Activated naive CD4-positive, alpha-beta T cell treated with anti-CD3 and anti-CD28 coated beads for 36 hours (primary cell): ENCODE measurements at regions of chr7 and their contacts with region 1.

Region 1: DNA sequence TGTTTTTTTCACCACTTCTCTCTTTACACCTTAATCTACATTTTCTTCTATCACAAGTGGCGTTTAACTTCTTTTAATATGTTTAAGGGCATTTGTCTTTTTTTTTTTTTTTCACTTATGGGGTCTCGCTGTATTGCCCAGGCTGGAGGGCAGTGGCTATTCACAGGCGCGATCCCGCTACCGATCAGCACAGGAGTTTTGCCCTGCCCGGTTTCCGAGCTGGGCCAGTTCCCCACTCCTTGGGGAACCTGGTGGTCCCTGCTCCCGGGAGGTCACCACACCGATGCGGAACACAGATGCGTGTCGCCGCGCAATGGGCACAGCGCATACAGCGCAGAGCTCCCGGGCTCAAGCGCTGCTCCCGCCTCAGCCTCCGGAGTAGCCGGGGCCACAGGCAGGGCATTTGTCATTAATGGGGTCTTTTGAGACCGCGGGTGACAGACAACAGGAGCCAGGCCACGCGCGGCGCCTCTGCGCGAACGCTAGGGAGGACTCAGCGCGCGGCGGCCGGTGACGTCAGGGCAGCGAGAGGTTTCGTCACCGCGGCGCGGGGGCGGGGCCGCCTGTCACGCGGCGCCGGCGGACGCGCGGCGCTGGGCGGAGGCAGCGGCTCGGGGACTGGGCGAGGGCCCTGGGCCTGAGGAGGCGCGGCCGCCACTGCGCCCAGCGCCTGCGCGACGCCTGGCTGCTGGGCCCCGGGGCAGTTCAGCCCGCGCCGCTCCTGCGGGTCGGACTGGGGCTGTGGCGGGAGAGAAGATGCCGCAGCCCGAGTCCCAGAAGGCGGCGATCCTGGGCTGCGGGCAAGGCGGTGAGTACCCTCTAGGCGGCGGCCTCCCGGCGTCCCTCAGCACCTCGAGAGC is at the start of gene GALNT11:
- DNase-seq: peak; percentile 81
- H3K4me3 Mint-ChIP-seq: peak within 1 kb of the TSS; percentile 80
- H3K27ac Mint-ChIP-seq: peak within 1 kb of the TSS; percentile 77
- H3K4me1 Mint-ChIP-seq: peaks cover 30% of the 10 kb centered on the region
- H3K27me3 Mint-ChIP-seq: no peaks in the 10 kb centered on the region
- total RNA-seq, gene GALNT11: 15.6 to 19.8 TPM

Region 2: DNA sequence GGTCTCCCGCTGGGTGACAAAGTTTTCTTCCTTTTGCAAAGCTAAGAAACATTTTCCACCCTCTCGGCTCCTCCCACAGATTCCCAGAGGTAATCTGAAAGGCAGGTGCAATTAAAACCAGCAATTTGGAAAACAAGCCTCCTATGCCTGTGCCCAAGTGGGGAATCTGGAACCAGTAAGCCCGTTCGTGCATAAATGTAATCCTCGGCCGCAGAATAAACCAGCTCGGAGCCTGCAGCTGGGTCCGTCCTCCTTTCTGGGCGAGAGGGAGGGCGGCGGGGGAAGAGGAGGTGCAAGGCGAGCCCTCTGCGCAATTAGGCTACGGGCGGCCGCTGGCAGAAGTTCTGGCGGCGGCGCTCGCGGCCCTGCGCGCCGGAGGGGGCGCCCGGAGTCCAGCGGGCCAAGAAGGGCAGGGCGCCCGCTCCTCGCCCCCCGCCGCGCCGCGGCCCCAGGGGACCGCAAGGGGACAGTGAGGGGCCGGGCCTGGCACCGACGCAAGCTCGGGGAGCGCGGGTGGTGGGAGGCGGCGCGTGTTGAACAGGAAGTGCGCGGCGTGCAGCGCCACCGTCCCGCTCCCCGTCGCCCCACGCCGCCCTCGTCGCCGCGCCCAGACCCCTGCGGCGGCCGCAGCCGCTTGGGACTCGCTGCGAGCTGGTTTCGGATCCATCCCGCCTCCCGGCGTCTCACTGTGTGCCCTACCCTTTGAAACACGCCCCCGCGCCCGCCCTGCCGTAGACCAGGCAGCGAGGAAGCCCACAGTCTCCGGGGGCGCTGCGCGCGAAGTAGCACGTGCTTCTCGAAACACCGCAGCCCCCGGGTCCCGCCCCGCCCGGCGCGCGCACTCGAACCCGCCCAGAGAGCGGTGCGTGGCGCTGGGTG is 148.2 kb before region 1 on chr7 and contains the start of gene PRKAG2:
- CTCF ChIA-PET with region 1: no interaction called
- intact Hi-C with region 1: loop called (anchors 2 kb)
- DNase-seq: peak; percentile 63
- H3K4me3 Mint-ChIP-seq: peak within 1 kb of the TSS; percentile 96
- H3K27ac Mint-ChIP-seq: peak within 1 kb of the TSS; percentile 81
- H3K4me1 Mint-ChIP-seq: peaks cover 10% of the 10 kb centered on the region
- H3K27me3 Mint-ChIP-seq: no peaks in the 10 kb centered on the region
- total RNA-seq, gene PRKAG2: 16.9 to 18.7 TPM

Region 3: GRCh38 chr7:151999424-152000090 is 25.8 kb before region 1 on chr7:
- CTCF ChIA-PET with region 1: no interaction called
- intact Hi-C with region 1: no loop called
- DNase-seq: no peak
- H3K4me3 Mint-ChIP-seq: no peak overlapping the region
- H3K27ac Mint-ChIP-seq: no peak overlapping the region
- H3K4me1 Mint-ChIP-seq: no peaks in the 10 kb centered on the region
- H3K27me3 Mint-ChIP-seq: no peaks in the 10 kb centered on the region

Region 4: DNA sequence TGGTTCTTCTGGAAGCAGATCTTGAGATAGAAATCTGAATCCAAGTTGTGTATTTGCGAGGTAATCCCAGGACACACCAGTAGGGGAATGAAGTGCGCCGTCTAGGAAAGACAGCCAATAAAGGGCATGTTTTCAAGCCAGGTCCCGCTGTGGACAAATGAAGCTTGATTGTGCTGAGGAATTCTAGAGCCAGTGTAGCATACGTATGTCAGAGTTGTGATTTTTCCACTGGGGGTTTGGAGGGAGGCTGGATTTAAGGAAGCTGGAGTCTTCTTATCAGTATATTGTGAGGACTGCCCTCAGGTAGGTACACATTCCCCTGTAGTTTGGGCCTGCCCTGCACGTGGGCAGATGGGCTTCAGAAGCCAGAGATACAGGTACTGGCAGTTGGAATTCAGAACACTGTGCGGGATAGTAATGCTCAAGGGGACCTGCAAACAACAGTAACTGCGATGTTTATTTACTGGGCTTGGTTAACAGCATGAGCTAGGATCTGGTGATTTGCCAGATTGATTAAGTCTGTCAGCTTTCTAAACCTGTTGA is 51.1 kb after region 1 on chr7:
- CTCF ChIA-PET with region 1: interaction called, 3 read pairs
- intact Hi-C with region 1: loop called (anchors 1 kb)
- DNase-seq: peak; percentile 48
- H3K4me3 Mint-ChIP-seq: no peak overlapping the region
- H3K27ac Mint-ChIP-seq: no peak overlapping the region
- H3K4me1 Mint-ChIP-seq: peaks cover 26% of the 10 kb centered on the region
- H3K27me3 Mint-ChIP-seq: no peaks in the 10 kb centered on the region

Region 5: GRCh38 chr7:152759949-152760853 is 734.9 kb after region 1 on chr7:
- CTCF ChIA-PET with region 1: no interaction called
- intact Hi-C with region 1: loop called (anchors 1 kb)
- DNase-seq: peak; percentile 31
- H3K4me3 Mint-ChIP-seq: peak overlapping the region; percentile 84
- H3K27ac Mint-ChIP-seq: peak overlapping the region; percentile 79
- H3K4me1 Mint-ChIP-seq: peaks cover 20% of the 10 kb centered on the region
- H3K27me3 Mint-ChIP-seq: no peaks in the 10 kb centered on the region